Right ventricle myocardium superior (tissue), 1 donor: ENCODE measurements at regions of chr9 and their contacts with region 1.

Region 1: GRCh38 chr9:109320742-109321448 is at the start of gene EPB41L4B:
- DNase-seq: peak; percentile 91
- ATAC-seq: peak; percentile 92
- total RNA-seq, gene EPB41L4B: 9.9 TPM

Region 2: GRCh38 chr9:109182940-109183798 is 137.7 kb before region 1 on chr9:
- intact Hi-C with region 1: loop called (anchors 10 kb)
- DNase-seq: no peak
- ATAC-seq: peak; percentile 63

Region 3: DNA sequence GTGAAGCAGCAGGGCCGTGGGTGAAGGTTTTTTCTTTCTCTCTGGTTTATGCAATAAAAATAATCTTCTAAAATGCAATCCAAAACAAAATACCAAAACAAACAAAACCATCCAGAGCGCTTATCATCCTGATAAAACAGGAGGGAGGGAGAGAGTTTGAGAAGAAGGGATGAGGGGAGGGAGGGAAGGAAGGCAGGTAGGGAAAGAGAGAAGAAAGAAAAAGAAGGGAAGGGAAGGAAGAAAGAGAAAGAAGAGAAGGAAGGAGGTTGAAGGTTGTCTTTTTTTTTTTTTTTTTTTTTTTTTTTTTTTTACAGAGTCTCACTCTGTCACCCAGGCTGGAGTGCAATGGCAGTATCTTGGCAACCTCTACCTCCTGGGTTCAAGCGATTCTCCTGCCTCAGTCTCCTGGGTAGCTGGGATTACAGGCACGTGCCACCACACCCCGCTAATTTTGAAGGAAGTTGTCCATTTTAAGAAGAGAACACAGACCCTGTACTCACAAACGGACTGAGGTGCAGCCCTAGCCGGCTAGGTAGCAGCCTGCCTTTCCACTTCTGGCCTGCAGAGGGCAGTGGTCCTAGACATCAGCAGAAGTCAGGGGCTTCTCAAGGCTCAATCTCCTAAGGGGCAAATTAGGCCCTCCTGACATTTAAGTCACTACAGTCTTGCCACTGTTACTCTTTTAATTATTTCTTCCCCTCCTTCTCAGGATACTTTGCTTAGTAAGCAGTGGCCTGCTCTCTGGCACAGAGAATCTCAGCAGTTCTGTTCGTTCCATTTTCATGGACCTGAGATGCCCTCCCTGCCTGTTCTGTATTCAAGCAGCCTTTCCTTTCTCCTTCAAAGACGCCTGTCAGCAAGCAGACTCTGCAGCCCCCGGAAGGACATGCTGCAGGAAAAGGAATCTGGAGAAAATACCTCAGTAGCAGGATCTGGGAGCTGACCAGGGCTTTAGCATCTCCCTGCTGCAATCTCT is 76.5 kb before region 1 on chr9:
- intact Hi-C with region 1: loop called (anchors 2 kb)
- DNase-seq: peak; percentile 85
- ATAC-seq: peak; percentile 91

Region 4: DNA sequence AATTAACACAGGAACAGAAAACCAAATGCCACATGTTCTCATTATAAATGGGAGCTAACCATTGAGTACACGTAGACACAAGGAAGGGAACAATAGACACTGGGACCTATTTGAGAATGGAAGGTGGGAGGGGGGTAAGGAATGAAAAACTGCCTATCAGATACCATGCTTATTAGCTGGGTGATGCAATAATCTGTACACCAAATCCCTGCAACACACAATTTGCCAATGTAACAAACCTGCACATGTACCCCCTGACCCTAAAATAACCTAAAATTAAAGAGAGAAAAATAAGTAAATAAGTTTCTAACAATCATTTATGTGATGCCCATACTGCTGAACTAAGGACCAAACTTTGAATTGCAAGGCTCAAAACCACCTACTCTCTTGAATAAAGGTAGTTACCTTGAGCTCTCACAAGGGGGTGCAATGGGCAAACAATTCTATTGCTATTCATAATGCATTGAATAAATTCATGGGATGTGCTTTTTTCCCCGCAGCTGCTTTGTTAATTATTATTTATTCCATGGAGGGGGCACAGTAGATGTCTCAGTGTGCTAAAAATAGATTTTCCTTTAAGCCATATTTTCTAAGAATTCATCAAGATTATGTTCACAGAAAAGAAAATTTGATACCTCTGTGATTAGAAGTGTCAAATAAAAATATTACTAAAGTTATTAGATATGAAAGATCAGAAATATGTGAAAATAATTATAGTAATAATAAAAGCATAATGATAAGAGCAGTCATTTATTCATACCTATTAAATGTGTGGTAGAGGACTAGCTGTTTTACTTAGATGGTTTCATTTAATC is 253.4 kb after region 1 on chr9:
- intact Hi-C with region 1: no loop called
- DNase-seq: no peak
- ATAC-seq: peak; percentile 81